Heart left ventricle (tissue), 16 donors: ENCODE measurements at regions of chr1 and their contacts with region 1.

Region 1: GRCh38 chr1:115251856-115252255 is 86.2 kb downstream of the NGF start:
- DNase-seq: no peak
- ATAC-seq: peak; percentile 87 to 96 (median 90)
- H3K4me3 ChIP-seq: no peak overlapping the region
- H3K27ac ChIP-seq: peak overlapping the region in 10 of 12 donors; percentile 6 to 80 (median 66)
- H3K4me1 ChIP-seq: peaks cover 0 to 17% (median 11%) of the 10 kb centered on the region in 12 donors
- H3K27me3 ChIP-seq: no peaks in the 10 kb centered on the region
- CTCF ChIP-seq: no peak
- POLR2A ChIP-seq: no peak

Region 2: DNA sequence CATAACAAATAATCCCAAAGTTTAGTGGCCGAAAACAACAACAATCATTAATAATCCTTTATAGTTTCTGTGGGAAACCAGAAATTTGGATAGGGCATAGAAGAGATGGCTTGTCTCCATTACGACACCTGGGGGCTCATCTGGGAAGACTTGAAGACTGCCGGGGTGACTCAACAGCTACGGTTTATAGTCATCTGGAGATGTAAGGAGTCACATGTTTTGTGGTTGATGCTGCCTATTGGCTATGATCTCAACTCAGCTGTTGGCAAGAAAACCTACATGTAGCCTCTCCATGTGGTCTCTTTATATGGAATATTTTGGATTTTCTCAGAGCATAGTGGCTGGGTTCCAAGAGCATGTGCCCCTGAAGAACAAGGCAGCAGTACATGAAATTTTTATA is 133.2 kb before region 1 on chr1:
- intact Hi-C with region 1: no loop called
- DNase-seq: no peak
- ATAC-seq: no peak
- H3K4me3 ChIP-seq: no peak overlapping the region
- H3K27ac ChIP-seq: no peak overlapping the region
- H3K4me1 ChIP-seq: peaks cover 0 to 4% (median 0%) of the 10 kb centered on the region in 12 donors
- H3K27me3 ChIP-seq: peaks cover 0 to 4% (median 0%) of the 10 kb centered on the region in 9 donors
- CTCF ChIP-seq: no peak
- POLR2A ChIP-seq: no peak

Region 3: GRCh38 chr1:115184951-115185331 is 66.9 kb before region 1 on chr1:
- intact Hi-C with region 1: loop called in 1 of 10 experiments (anchors 2 kb)
- DNase-seq: peak in 2 of 5 donors; percentile 47 to 78
- ATAC-seq: peak; percentile 73 to 91 (median 86)
- H3K4me3 ChIP-seq: peak overlapping the region in 5 of 12 donors; percentile 7 to 24 (median 12)
- H3K27ac ChIP-seq: peak overlapping the region; percentile 79 to 96 (median 88)
- H3K4me1 ChIP-seq: peaks cover 4 to 47% (median 19%) of the 10 kb centered on the region in 12 donors
- H3K27me3 ChIP-seq: no peaks in the 10 kb centered on the region
- CTCF ChIP-seq: no peak
- POLR2A ChIP-seq: no peak

Region 4: DNA sequence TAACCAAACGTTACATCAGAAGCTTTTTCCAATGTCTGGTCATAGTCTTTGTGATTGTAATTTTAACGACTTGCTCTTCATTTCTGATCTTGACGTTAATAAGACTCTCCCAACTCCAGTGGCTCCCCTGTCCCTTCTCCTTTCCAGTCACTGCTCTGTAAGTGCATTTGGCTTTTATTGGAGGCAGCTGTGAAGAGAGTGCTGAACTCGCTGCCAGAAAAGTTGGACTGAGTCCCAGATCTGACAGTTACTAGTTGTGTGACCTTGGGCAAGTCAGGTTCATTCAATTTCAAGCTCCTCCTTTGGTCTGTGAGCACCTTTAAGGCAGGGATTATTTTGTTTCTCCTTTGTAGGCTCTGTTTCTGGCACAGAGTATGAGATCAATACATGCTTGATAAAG is 52.9 kb before region 1 on chr1:
- intact Hi-C with region 1: loop called in 2 of 10 experiments (anchors 5 kb)
- DNase-seq: peak in 4 of 5 donors; percentile 57 to 66 (median 62)
- ATAC-seq: peak; percentile 70 to 96 (median 94)
- H3K4me3 ChIP-seq: no peak overlapping the region
- H3K27ac ChIP-seq: peak overlapping the region in 6 of 12 donors; percentile 2 to 50 (median 17)
- H3K4me1 ChIP-seq: peaks cover 0 to 32% (median 9%) of the 10 kb centered on the region in 12 donors
- H3K27me3 ChIP-seq: no peaks in the 10 kb centered on the region
- CTCF ChIP-seq: no peak
- POLR2A ChIP-seq: no peak